Activated B cell treated with CpG ODN at 0.5 μM for 24 hours (primary cell): ENCODE measurements at regions of chr1 and their contacts with region 1.

Region 1: GRCh38 chr1:44721485-44722361 is 9.2 kb downstream of the RNU5D-1 start:
- DNase-seq: peak; percentile 61
- ATAC-seq: peak; percentile 80
- H3K4me3 Mint-ChIP-seq: peak overlapping the region; percentile 47
- H3K27ac Mint-ChIP-seq: peak overlapping the region; percentile 99
- H3K4me1 Mint-ChIP-seq: peaks cover 76% of the 10 kb centered on the region
- H3K27me3 Mint-ChIP-seq: no peaks in the 10 kb centered on the region
- CTCF ChIP-seq: no peak

Region 2: GRCh38 chr1:44401256-44402228 is 320.2 kb before region 1 on chr1:
- CTCF ChIA-PET with region 1: no interaction called
- POLR2A ChIA-PET with region 1: no interaction called
- intact Hi-C with region 1: no loop called
- DNase-seq: no peak
- ATAC-seq: no peak
- H3K4me3 Mint-ChIP-seq: no peak overlapping the region
- H3K27ac Mint-ChIP-seq: no peak overlapping the region
- H3K4me1 Mint-ChIP-seq: peaks cover 16% of the 10 kb centered on the region
- H3K27me3 Mint-ChIP-seq: peaks cover 61% of the 10 kb centered on the region
- CTCF ChIP-seq: no peak

Region 3: DNA sequence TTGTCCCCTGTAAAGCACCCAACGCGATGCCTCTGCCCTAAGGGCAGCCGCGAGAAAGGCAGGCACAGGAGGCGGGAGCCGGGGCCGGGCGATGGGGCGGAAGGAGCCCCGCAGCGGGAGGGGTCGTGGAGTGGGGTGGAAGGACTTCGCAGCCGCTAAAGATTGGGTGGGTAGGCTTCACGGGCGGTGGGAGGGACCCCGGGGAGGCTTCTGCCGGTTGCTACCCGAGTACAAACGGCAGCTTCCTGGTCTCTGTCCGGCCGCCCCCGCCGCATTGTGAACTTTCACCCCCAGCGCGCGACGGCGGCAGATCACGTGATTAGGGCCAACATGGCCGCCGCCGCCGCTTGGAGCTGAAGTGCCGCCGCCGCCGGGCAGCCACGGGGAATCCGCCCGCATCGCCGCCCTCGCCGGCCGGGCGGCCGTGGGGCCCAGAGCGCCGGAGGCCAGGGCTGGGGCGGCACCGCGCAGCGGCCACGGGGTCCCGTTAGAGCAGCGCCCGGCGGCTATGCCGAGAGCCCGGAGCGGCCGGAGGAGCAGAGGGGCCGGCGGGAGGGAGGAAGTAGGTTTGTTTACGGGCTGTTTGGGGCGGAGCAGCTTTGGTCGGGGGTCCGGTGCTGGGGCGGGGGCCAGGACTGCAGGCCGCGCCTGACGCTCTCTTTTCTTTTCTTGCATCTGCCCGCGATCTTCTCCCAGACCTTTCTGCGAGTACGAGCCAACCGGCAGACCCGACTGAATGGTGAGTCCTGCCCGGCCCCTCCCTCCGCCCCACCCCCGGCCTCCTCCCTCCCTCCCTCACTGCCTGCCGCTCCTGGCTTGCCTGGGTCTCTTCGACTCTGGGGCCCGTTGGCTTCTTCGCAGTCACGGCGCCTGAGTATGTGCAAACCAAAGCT is 89.8 kb before region 1 on chr1:
- CTCF ChIA-PET with region 1: no interaction called
- POLR2A ChIA-PET with region 1: interaction called, 35 read pairs
- intact Hi-C with region 1: no loop called
- DNase-seq: peak; percentile 92
- ATAC-seq: peak; percentile 76
- H3K4me3 Mint-ChIP-seq: peak overlapping the region; percentile 91
- H3K27ac Mint-ChIP-seq: peak overlapping the region; percentile 98
- H3K4me1 Mint-ChIP-seq: peaks cover 38% of the 10 kb centered on the region
- H3K27me3 Mint-ChIP-seq: no peaks in the 10 kb centered on the region
- CTCF ChIP-seq: no peak

Region 4: DNA sequence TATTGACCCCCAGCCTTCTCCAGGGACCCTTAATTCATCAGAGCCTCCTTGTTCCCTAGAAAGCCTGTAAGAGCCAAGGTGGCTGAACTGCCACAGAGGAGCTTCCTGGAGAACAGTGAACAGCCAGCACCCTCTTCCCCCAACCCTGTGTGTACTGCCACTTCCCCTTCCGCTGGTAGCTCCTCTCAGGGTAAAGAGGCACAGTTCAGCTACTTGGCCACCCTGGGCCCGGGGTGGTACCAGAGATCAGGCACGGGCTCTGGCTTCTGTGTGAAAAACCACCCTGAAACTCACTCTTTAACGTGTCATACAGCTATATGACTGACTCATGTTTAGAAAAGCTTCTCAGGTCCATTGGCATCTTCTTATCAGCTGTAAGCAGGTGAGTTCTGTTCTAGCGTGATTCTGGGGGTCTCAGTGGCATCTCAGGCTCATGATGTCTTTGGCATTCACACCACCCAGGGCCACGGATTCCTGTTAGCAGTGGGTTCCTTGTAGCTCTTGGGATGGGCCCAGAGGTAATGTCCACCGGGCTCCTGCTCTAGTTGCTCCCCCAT is 24.9 kb before region 1 on chr1:
- CTCF ChIA-PET with region 1: interaction called, 3 read pairs
- POLR2A ChIA-PET with region 1: interaction called, 101 read pairs
- intact Hi-C with region 1: no loop called
- DNase-seq: peak; percentile 30
- ATAC-seq: peak; percentile 70
- H3K4me3 Mint-ChIP-seq: peak overlapping the region; percentile 55
- H3K27ac Mint-ChIP-seq: peak overlapping the region; percentile 84
- H3K4me1 Mint-ChIP-seq: peaks cover 52% of the 10 kb centered on the region
- H3K27me3 Mint-ChIP-seq: no peaks in the 10 kb centered on the region
- CTCF ChIP-seq: no peak

Region 5: GRCh38 chr1:44786138-44786840 is 64.6 kb after region 1 on chr1:
- CTCF ChIA-PET with region 1: no interaction called
- POLR2A ChIA-PET with region 1: interaction called, 80 read pairs
- intact Hi-C with region 1: no loop called
- DNase-seq: peak; percentile 81
- ATAC-seq: peak; percentile 79
- H3K4me3 Mint-ChIP-seq: peak overlapping the region; percentile 75
- H3K27ac Mint-ChIP-seq: peak overlapping the region; percentile 86
- H3K4me1 Mint-ChIP-seq: peaks cover 32% of the 10 kb centered on the region
- H3K27me3 Mint-ChIP-seq: no peaks in the 10 kb centered on the region
- CTCF ChIP-seq: peak; percentile 100

Region 6: GRCh38 chr1:44985747-44986359 is 264.1 kb after region 1 on chr1:
- CTCF ChIA-PET with region 1: no interaction called
- POLR2A ChIA-PET with region 1: interaction called, 17 read pairs
- intact Hi-C with region 1: loop called (anchors 2 kb)
- DNase-seq: no peak
- ATAC-seq: no peak
- H3K4me3 Mint-ChIP-seq: peak overlapping the region; percentile 100
- H3K27ac Mint-ChIP-seq: peak overlapping the region; percentile 94
- H3K4me1 Mint-ChIP-seq: peaks cover 23% of the 10 kb centered on the region
- H3K27me3 Mint-ChIP-seq: no peaks in the 10 kb centered on the region
- CTCF ChIP-seq: no peak

Region 7: GRCh38 chr1:45393718-45394302 is 672.1 kb after region 1 on chr1:
- CTCF ChIA-PET with region 1: no interaction called
- POLR2A ChIA-PET with region 1: interaction called, 13 read pairs
- intact Hi-C with region 1: no loop called
- DNase-seq: peak; percentile 41
- ATAC-seq: peak; percentile 88
- H3K4me3 Mint-ChIP-seq: peak overlapping the region; percentile 62
- H3K27ac Mint-ChIP-seq: peak overlapping the region; percentile 94
- H3K4me1 Mint-ChIP-seq: peaks cover 52% of the 10 kb centered on the region
- H3K27me3 Mint-ChIP-seq: no peaks in the 10 kb centered on the region
- CTCF ChIP-seq: no peak

Region 8: GRCh38 chr1:45543581-45544417 is 822.1 kb after region 1 on chr1:
- CTCF ChIA-PET with region 1: no interaction called
- POLR2A ChIA-PET with region 1: interaction called, 19 read pairs
- intact Hi-C with region 1: no loop called
- DNase-seq: peak; percentile 55
- ATAC-seq: peak; percentile 84
- H3K4me3 Mint-ChIP-seq: peak overlapping the region; percentile 76
- H3K27ac Mint-ChIP-seq: peak overlapping the region; percentile 94
- H3K4me1 Mint-ChIP-seq: peaks cover 56% of the 10 kb centered on the region
- H3K27me3 Mint-ChIP-seq: no peaks in the 10 kb centered on the region
- CTCF ChIP-seq: no peak